Breast epithelium (tissue), 4 donors: ENCODE measurements at regions of chr1 and their contacts with region 1.

Region 1: GRCh38 chr1:44437107-44437716 is 32.2 kb downstream of the RNF220 start:
- DNase-seq: no peak
- H3K4me3 ChIP-seq: no peak overlapping the region
- H3K27ac ChIP-seq: no peak overlapping the region
- H3K4me1 ChIP-seq: no peaks in the 10 kb centered on the region
- H3K27me3 ChIP-seq: no peaks in the 10 kb centered on the region
- CTCF ChIP-seq: no peak
- POLR2A ChIP-seq: no peak

Region 2: GRCh38 chr1:44072204-44072603 is 365.0 kb before region 1 on chr1:
- intact Hi-C with region 1: no loop called
- DNase-seq: no peak
- H3K4me3 ChIP-seq: no peak overlapping the region
- H3K27ac ChIP-seq: no peak overlapping the region
- H3K4me1 ChIP-seq: no peaks in the 10 kb centered on the region
- H3K27me3 ChIP-seq: no peaks in the 10 kb centered on the region
- CTCF ChIP-seq: no peak
- POLR2A ChIP-seq: no peak

Region 3: GRCh38 chr1:44472620-44473525 is 35.7 kb after region 1 on chr1:
- intact Hi-C with region 1: loop called (anchors 1 kb)
- DNase-seq: peak in 1 of 2 donors; percentile 24
- H3K4me3 ChIP-seq: peak overlapping the region in 1 of 3 donors; percentile 52
- H3K27ac ChIP-seq: peak overlapping the region in 1 of 2 donors; percentile 33
- H3K4me1 ChIP-seq: no peaks in the 10 kb centered on the region
- H3K27me3 ChIP-seq: no peaks in the 10 kb centered on the region
- CTCF ChIP-seq: no peak
- POLR2A ChIP-seq: no peak

Region 4: DNA sequence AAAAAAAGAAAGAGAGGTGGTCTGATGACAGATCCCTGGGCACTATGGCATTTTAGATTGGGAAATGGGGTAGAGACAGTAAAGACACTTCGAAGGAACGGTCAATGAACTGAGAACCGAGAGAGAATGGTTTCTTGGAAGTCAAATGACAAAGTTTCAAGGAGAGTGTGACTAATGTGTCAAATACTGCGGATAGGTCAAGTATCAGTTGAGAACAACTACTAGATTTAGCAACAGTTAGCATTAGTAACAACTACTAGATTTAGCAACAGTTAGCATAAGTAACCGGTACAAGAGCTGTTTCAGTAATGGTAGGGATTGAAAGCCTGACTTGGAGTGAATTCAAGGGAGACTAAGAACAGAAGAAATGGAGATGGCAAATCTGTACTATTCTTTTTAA is 609.8 kb after region 1 on chr1:
- intact Hi-C with region 1: loop called (anchors 5 kb)
- DNase-seq: no peak
- H3K4me3 ChIP-seq: no peak overlapping the region
- H3K27ac ChIP-seq: no peak overlapping the region
- H3K4me1 ChIP-seq: no peaks in the 10 kb centered on the region
- H3K27me3 ChIP-seq: no peaks in the 10 kb centered on the region
- CTCF ChIP-seq: no peak
- POLR2A ChIP-seq: no peak